H1 (cell line): ENCODE measurements at regions of chr19 and their contacts with region 1.

Region 1: DNA sequence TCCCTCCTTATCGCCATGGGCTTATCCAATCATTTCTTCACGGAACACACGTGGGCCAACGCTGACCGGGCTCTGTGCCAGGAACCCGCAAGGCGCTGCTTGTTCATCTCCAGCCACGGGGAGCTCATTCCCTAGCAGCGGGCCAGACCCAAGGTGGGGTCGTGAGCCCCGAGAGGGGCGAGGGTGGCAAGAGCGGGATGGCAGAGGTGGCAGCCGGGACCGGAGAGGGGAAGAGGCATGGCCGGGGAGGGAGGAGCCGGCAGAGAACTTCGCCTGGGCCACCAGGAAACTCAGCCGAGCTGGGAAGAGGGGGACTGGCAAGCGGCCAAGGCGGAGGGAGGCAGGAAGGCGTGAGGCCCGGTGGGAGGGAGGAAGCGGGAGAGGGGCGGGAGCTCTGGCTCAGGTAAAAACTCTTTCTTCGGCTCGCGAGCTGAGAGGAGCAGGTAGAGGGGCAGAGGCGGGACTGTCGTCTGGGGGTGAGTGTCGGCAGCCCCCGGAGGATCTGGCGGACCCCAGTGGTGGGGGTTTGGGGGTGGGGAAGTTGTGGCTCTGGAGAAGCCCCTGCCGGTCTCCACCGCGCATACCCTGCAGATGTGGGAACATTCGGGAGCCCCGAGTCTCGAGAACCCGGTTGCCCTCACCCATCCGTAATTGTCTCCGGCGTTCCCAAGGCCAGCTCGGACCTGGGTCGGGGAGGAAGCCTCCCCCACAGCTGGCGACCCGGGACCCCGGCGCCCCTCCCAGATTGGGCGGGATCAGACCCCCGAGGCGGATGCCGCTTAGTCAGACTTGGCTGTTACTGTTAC is at the start of gene B3GNT3:
- DNase-seq: peak in 1 of 2 experiments; percentile 81
- H3K4me3 ChIP-seq: peak within 1 kb of the TSS; percentile 40 to 69 (median 58)
- H3K27ac ChIP-seq: no peak within 1 kb of the TSS
- H3K4me1 ChIP-seq: peaks cover 0 to 6% (median 4%) of the 10 kb centered on the region in 4 experiments; a peak in 5 of 7 replicates
- H3K27me3 ChIP-seq: peaks cover 0 to 9% (median 7%) of the 10 kb centered on the region in 4 experiments; a peak in 6 of 7 replicates
- CTCF ChIP-seq: no peak
- EP300 ChIP-seq: no peak
- POLR2A ChIP-seq: no peak
- RAD21 ChIP-seq: no peak
- total RNA-seq, gene B3GNT3: 1.5 and 1.8 TPM in 2 replicates

Region 2: GRCh38 chr19:17522988-17523872 is 271.7 kb before region 1 on chr19:
- CTCF ChIA-PET with region 1: no interaction called
- POLR2A ChIA-PET with region 1: no interaction called
- DNase-seq: no peak
- H3K4me3 ChIP-seq: no peak overlapping the region
- H3K27ac ChIP-seq: no peak overlapping the region
- H3K4me1 ChIP-seq: no peaks in the 10 kb centered on the region; a peak in 1 of 7 replicates
- H3K27me3 ChIP-seq: no peaks in the 10 kb centered on the region
- CTCF ChIP-seq: no peak
- EP300 ChIP-seq: no peak
- POLR2A ChIP-seq: no peak
- RAD21 ChIP-seq: no peak

Region 3: GRCh38 chr19:17784201-17785008 is 10.5 kb before region 1 on chr19:
- CTCF ChIA-PET with region 1: interaction called, 11 read pairs
- POLR2A ChIA-PET with region 1: interaction called, 5 read pairs
- DNase-seq: peak in 1 of 2 experiments; percentile 96
- H3K4me3 ChIP-seq: no peak overlapping the region
- H3K27ac ChIP-seq: no peak overlapping the region
- H3K4me1 ChIP-seq: peaks cover 0 to 4% (median 3%) of the 10 kb centered on the region in 4 experiments; a peak in 4 of 7 replicates
- H3K27me3 ChIP-seq: no peaks in the 10 kb centered on the region
- CTCF ChIP-seq: peak; percentile 66 to 89 (median 87)
- EP300 ChIP-seq: no peak
- POLR2A ChIP-seq: no peak
- RAD21 ChIP-seq: peak; percentile 66 to 77

Region 4: GRCh38 chr19:17871878-17872250 is 76.9 kb after region 1 on chr19 and contains the start of gene SLC5A5:
- CTCF ChIA-PET with region 1: no interaction called
- POLR2A ChIA-PET with region 1: no interaction called
- DNase-seq: peak in 1 of 2 experiments; percentile 61
- H3K4me3 ChIP-seq: no peak within 1 kb of the TSS
- H3K27ac ChIP-seq: no peak within 1 kb of the TSS
- H3K4me1 ChIP-seq: peaks cover 0 to 14% (median 5%) of the 10 kb centered on the region in 4 experiments; a peak in 6 of 7 replicates
- H3K27me3 ChIP-seq: peaks cover 0 to 9% (median 5%) of the 10 kb centered on the region in 4 experiments; a peak in 5 of 7 replicates
- CTCF ChIP-seq: no peak
- EP300 ChIP-seq: no peak
- POLR2A ChIP-seq: no peak
- RAD21 ChIP-seq: 0 out of 4 replicates have a peak, but pooled peaks of 1 of the 2 experiments have one; percentile 2
- total RNA-seq, gene SLC5A5: 1.2 and 1.5 TPM in 2 replicates